ENCODE measurements at regions of chr14 and their contacts with region 1.

Region 1: DNA sequence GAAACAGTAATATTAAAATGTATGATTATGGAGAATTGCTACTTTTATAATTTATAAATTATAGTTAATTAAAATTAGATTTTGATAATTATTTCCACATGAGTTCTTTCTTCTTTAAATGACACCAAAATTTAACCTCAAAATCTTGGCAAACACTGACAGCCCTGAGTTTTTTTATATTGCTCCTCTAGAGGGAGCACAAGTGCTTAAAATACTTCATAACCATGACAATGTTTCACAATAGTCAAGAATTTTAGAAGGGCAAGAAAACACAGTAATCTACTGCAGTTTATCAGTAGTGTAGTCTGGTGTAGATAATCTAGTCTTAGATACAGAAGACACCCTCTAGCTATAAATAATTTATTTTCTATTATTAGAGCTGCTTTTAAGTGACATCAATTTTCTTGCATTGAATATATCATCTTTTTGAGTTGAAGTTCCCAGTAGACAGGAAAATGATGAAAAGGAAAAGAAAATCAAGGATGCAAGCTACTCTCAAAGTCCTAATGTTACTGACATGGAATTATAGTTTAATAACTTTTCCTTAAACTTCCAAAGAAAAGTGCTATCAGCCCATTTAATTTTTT is 14.3 kb upstream of the PTGER2 start:
- DNase-seq: peak; percentile 60
- H3K4me3 Mint-ChIP-seq: no peak overlapping the region
- H3K27ac Mint-ChIP-seq: no peak overlapping the region
- H3K4me1 Mint-ChIP-seq: no peaks in the 10 kb centered on the region
- H3K27me3 Mint-ChIP-seq: no peaks in the 10 kb centered on the region
- CTCF ChIP-seq: peak; percentile 61

Region 2: DNA sequence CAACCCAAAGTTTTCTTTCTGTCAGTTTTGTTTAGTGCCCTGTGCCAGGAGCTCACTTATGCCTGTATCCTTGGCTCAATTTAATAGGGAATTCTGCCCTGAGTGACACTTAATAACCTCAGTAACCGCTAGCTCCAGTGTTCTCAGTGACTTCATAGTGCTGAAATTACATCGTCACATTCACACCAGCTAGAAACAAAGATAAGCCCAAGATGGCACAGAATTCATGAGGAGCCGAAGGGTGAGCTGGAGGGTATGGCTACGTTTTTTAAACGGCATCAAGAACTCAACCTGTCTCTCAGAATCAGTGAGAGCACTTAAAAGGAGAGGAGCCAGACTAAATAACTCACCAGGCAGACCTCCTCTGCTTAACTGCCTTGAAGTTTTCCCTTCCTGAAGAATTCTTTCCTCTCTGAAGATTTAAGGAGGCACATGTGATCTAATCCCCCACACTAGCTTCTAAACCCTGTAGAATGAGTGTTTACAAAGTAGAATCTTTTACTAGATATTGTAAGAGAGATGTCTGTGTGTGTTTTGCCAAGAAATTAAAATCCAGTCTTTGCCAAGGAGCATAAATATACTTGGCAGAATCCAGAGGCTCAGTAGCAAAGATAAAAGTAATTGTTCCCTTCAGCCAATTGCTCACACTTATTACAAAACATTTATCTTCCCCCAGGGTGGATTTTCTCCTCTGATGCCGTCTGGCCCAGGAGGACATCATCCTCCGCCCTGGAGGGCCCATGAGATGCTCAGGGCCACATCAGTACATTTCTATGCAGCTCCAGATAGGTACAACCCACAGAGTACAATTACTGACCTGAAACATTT is 51.7 kb after region 1 on chr14:
- CTCF ChIA-PET with region 1: no interaction called
- POLR2A ChIA-PET with region 1: no interaction called
- intact Hi-C with region 1: no loop called
- DNase-seq: peak; percentile 78
- H3K4me3 Mint-ChIP-seq: peak overlapping the region; percentile 28
- H3K27ac Mint-ChIP-seq: peak overlapping the region; percentile 82
- H3K4me1 Mint-ChIP-seq: peaks cover 43% of the 10 kb centered on the region
- H3K27me3 Mint-ChIP-seq: no peaks in the 10 kb centered on the region
- CTCF ChIP-seq: no peak

Region 3: GRCh38 chr14:52413729-52414408 is 114.1 kb after region 1 on chr14:
- CTCF ChIA-PET with region 1: interaction called, 25 read pairs
- POLR2A ChIA-PET with region 1: no interaction called
- intact Hi-C with region 1: loop called (anchors 1 kb)
- DNase-seq: no peak
- H3K4me3 Mint-ChIP-seq: no peak overlapping the region
- H3K27ac Mint-ChIP-seq: no peak overlapping the region
- H3K4me1 Mint-ChIP-seq: no peaks in the 10 kb centered on the region
- H3K27me3 Mint-ChIP-seq: no peaks in the 10 kb centered on the region
- CTCF ChIP-seq: no peak

Region 4: DNA sequence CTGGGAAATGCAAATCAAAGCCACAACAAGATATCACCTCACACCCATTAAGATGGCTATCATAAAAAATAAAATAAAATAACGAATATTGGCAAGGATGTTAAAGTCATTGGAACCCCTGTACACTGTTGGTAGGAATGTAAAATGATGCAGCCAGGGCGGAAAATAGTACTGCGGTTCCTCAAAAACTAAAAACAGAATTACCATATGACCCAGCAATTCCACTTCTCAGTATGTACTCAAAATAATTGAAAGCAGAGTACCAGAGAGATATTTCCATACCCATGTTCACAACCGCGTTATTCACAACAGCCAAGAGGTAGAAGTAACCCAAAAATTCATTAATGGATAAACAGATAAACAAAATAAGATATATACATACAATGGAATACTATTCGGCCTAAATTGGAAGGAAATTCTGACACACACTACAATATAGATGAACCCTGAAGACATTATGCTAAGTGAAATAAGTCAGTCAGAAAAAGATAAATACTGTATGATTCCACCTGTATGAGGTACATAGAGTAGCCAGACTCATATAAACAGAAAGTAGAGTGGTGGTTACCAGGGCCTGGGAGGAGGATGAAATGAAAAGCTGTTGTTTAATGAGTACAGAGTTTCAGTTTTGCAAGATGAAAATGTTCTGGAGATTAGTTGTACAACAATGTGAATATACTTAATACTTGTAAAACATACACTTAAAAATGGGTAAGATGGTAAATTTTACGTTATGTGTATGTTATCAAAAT is 167.9 kb after region 1 on chr14:
- CTCF ChIA-PET with region 1: interaction called, 15 read pairs
- POLR2A ChIA-PET with region 1: no interaction called
- intact Hi-C with region 1: no loop called
- DNase-seq: no peak
- H3K4me3 Mint-ChIP-seq: no peak overlapping the region
- H3K27ac Mint-ChIP-seq: no peak overlapping the region
- H3K4me1 Mint-ChIP-seq: no peaks in the 10 kb centered on the region
- H3K27me3 Mint-ChIP-seq: no peaks in the 10 kb centered on the region
- CTCF ChIP-seq: no peak

Region 5: GRCh38 chr14:52473557-52473956 is 173.8 kb after region 1 on chr14:
- CTCF ChIA-PET with region 1: interaction called, 15 read pairs
- POLR2A ChIA-PET with region 1: no interaction called
- intact Hi-C with region 1: loop called (anchors 1 kb)
- DNase-seq: peak; percentile 53
- H3K4me3 Mint-ChIP-seq: no peak overlapping the region
- H3K27ac Mint-ChIP-seq: no peak overlapping the region
- H3K4me1 Mint-ChIP-seq: no peaks in the 10 kb centered on the region
- H3K27me3 Mint-ChIP-seq: no peaks in the 10 kb centered on the region
- CTCF ChIP-seq: peak; percentile 32

Measured in MCF 10A (cell line).